ENCODE measurements at regions of chr9 and their contacts with region 1.

Region 1: GRCh38 chr9:131270171-131271015 is 5.9 kb downstream of the FAM78A start:
- DNase-seq: peak in 25 of 35 experiments; percentile 35 to 75 (median 46)
- ATAC-seq: peak; percentile 11 to 34 (median 21)
- H3K4me3 ChIP-seq: peak overlapping the region; percentile 72 to 79
- H3K4me3 Mint-ChIP-seq: peak overlapping the region; percentile 91 to 99 (median 99)
- H3K27ac ChIP-seq: peak overlapping the region; percentile 92
- H3K27ac Mint-ChIP-seq: peak overlapping the region; percentile 98 to 99
- H3K4me1 ChIP-seq: peaks cover 31 to 75% of the 10 kb centered on the region in 2 experiments
- H3K4me1 Mint-ChIP-seq: peaks cover 56 to 69% (median 61%) of the 10 kb centered on the region in 3 donors
- H3K27me3 ChIP-seq: no peaks in the 10 kb centered on the region
- H3K27me3 Mint-ChIP-seq: no peaks in the 10 kb centered on the region

Region 2: GRCh38 chr9:131178382-131178781 is 92.0 kb before region 1 on chr9:
- CTCF ChIA-PET with region 1: interaction called, 4 to 12 read pairs
- POLR2A ChIA-PET with region 1: interaction called in 1 of 2 experiments, 4 read pairs
- DNase-seq: peak; percentile 48 to 83 (median 71)
- ATAC-seq: peak; percentile 97 to 98 (median 98)
- H3K4me3 ChIP-seq: no peak overlapping the region
- H3K4me3 Mint-ChIP-seq: no peak overlapping the region
- H3K27ac ChIP-seq: no peak overlapping the region
- H3K27ac Mint-ChIP-seq: peak overlapping the region in 1 of 2 donors; percentile 48
- H3K4me1 ChIP-seq: peaks cover 0 to 5% of the 10 kb centered on the region in 2 experiments
- H3K4me1 Mint-ChIP-seq: peaks cover 15 to 24% (median 15%) of the 10 kb centered on the region in 3 donors
- H3K27me3 ChIP-seq: no peaks in the 10 kb centered on the region
- H3K27me3 Mint-ChIP-seq: no peaks in the 10 kb centered on the region

Region 3: DNA sequence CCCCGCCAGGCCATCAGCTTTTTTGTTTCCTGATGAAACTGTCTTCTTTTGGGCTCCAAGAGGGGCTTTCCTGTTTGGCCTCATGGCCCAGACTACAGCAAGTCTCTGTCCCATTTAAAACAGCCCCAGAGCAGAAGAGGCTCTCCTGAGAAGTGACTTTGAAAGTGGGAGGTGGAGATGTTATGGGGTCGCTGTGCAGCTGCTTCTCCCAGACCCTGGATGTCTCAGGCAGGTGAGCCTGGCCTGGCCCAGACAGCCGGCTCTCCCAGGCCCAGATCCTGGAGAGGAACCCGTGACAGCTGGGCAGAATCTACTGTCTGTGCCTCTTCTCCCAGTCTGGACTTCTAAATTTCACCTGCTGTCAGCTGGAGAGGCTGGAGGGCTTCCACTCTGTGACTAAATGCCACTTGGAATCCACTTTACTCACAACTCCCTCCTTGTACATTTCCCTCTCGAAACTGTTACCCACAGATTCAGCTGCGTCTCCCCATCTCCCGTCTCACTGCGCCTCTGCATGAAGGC is 14.7 kb before region 1 on chr9:
- CTCF ChIA-PET with region 1: interaction called, 5 to 10 read pairs
- POLR2A ChIA-PET with region 1: interaction called, 5 to 24 read pairs
- DNase-seq: peak in 1 of 35 experiments; percentile 42
- ATAC-seq: peak in 3 of 4 experiments; percentile 12 to 31 (median 23)
- H3K4me3 ChIP-seq: peak overlapping the region; percentile 55 to 60
- H3K4me3 Mint-ChIP-seq: peak overlapping the region; percentile 81 to 86 (median 81)
- H3K27ac ChIP-seq: peak overlapping the region; percentile 93
- H3K27ac Mint-ChIP-seq: peak overlapping the region; percentile 99
- H3K4me1 ChIP-seq: peaks cover 37 to 100% of the 10 kb centered on the region in 2 experiments
- H3K4me1 Mint-ChIP-seq: peaks cover 62 to 87% (median 82%) of the 10 kb centered on the region in 3 donors
- H3K27me3 ChIP-seq: no peaks in the 10 kb centered on the region
- H3K27me3 Mint-ChIP-seq: no peaks in the 10 kb centered on the region

Region 4: GRCh38 chr9:131361202-131361833 is 90.9 kb after region 1 on chr9:
- CTCF ChIA-PET with region 1: no interaction called
- POLR2A ChIA-PET with region 1: no interaction called
- DNase-seq: peak in 14 of 35 experiments; percentile 7 to 45 (median 24)
- ATAC-seq: peak; percentile 29 to 59 (median 40)
- H3K4me3 ChIP-seq: no peak overlapping the region
- H3K4me3 Mint-ChIP-seq: peak overlapping the region in 2 of 3 donors; percentile 53 to 58
- H3K27ac ChIP-seq: no peak overlapping the region
- H3K27ac Mint-ChIP-seq: peak overlapping the region; percentile 89 to 90
- H3K4me1 ChIP-seq: peaks cover 8 to 39% of the 10 kb centered on the region in 2 experiments
- H3K4me1 Mint-ChIP-seq: peaks cover 29 to 36% (median 32%) of the 10 kb centered on the region in 3 donors
- H3K27me3 ChIP-seq: peaks cover 0 to 2% of the 10 kb centered on the region in 2 experiments
- H3K27me3 Mint-ChIP-seq: no peaks in the 10 kb centered on the region

Region 5: GRCh38 chr9:131678499-131679111 is 408.2 kb after region 1 on chr9:
- CTCF ChIA-PET with region 1: no interaction called
- POLR2A ChIA-PET with region 1: no interaction called
- DNase-seq: peak; percentile 33 to 78 (median 61)
- ATAC-seq: peak; percentile 83 to 98 (median 97)
- H3K4me3 ChIP-seq: no peak overlapping the region
- H3K4me3 Mint-ChIP-seq: peak overlapping the region; percentile 72 to 81 (median 73)
- H3K27ac ChIP-seq: peak overlapping the region; percentile 88
- H3K27ac Mint-ChIP-seq: peak overlapping the region; percentile 91 to 96
- H3K4me1 ChIP-seq: peaks cover 23 to 58% of the 10 kb centered on the region in 2 experiments
- H3K4me1 Mint-ChIP-seq: peaks cover 92 to 95% (median 95%) of the 10 kb centered on the region in 3 donors
- H3K27me3 ChIP-seq: no peaks in the 10 kb centered on the region
- H3K27me3 Mint-ChIP-seq: no peaks in the 10 kb centered on the region